Endothelial cell of umbilical vein (primary cell): ENCODE measurements at regions of chr17 and their contacts with region 1.

Region 1: DNA sequence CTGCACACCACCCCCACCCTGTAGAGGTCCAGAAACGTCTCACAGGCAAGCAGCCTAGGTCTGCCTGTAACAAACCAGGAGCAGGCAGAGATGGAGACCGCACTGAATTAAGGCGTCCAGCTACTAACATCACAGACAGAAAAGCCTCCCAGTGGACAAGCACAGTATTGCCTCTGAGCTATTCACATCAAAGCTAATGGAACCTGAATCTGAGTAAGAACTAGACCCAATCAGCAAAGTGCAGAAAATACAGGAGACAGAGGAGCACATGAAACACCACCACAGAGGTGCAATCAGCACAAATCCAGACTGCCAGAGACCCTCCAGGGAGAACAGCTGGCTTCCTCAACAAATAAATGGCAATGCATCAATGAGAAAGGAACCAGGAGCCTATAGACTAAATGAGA is 22.2 kb upstream of the PEMT start:
- DNase-seq: peak; percentile 73
- H3K4me3 ChIP-seq: no peak overlapping the region
- H3K27ac ChIP-seq: no peak overlapping the region
- H3K4me1 ChIP-seq: no peaks in the 10 kb centered on the region
- H3K27me3 ChIP-seq: peaks cover 0 to 1% of the 10 kb centered on the region in 2 experiments
- CTCF ChIP-seq: peak; percentile 66 to 78
- POLR2A ChIP-seq: no peak

Region 2: GRCh38 chr17:17568749-17569195 is 44.9 kb before region 1 on chr17:
- CTCF ChIA-PET with region 1: interaction called, 13 read pairs
- POLR2A ChIA-PET with region 1: no interaction called
- dilution Hi-C with region 1: no loop called
- intact Hi-C with region 1: no loop called
- DNase-seq: peak; percentile 38
- H3K4me3 ChIP-seq: no peak overlapping the region
- H3K27ac ChIP-seq: no peak overlapping the region
- H3K4me1 ChIP-seq: no peaks in the 10 kb centered on the region
- H3K27me3 ChIP-seq: no peaks in the 10 kb centered on the region
- CTCF ChIP-seq: peak; percentile 85 to 89
- POLR2A ChIP-seq: no peak

Region 3: GRCh38 chr17:17591355-17592298 is 22.1 kb before region 1 on chr17 and contains the start of gene PEMT:
- CTCF ChIA-PET with region 1: interaction called, 15 read pairs
- POLR2A ChIA-PET with region 1: interaction called, 6 read pairs
- dilution Hi-C with region 1: no loop called
- intact Hi-C with region 1: no loop called
- DNase-seq: peak; percentile 98
- H3K4me3 ChIP-seq: peak within 1 kb of the TSS; percentile 92 to 96 (median 95)
- H3K27ac ChIP-seq: peak within 1 kb of the TSS; percentile 67
- H3K4me1 ChIP-seq: peaks cover 9% of the 10 kb centered on the region
- H3K27me3 ChIP-seq: no peaks in the 10 kb centered on the region
- CTCF ChIP-seq: no peak
- POLR2A ChIP-seq: peak; percentile 84
- total RNA-seq, gene PEMT: 35.1 and 37.2 TPM in 2 replicates

Region 4: GRCh38 chr17:17598003-17598402 is 15.7 kb before region 1 on chr17:
- CTCF ChIA-PET with region 1: interaction called, 28 read pairs
- POLR2A ChIA-PET with region 1: no interaction called
- dilution Hi-C with region 1: no loop called
- intact Hi-C with region 1: no loop called
- DNase-seq: no peak
- H3K4me3 ChIP-seq: no peak overlapping the region
- H3K27ac ChIP-seq: no peak overlapping the region
- H3K4me1 ChIP-seq: no peaks in the 10 kb centered on the region
- H3K27me3 ChIP-seq: no peaks in the 10 kb centered on the region
- CTCF ChIP-seq: no peak
- POLR2A ChIP-seq: no peak

Region 5: GRCh38 chr17:17603178-17603894 is 10.4 kb before region 1 on chr17:
- CTCF ChIA-PET with region 1: interaction called, 28 read pairs
- POLR2A ChIA-PET with region 1: no interaction called
- dilution Hi-C with region 1: no loop called
- intact Hi-C with region 1: no loop called
- DNase-seq: no peak
- H3K4me3 ChIP-seq: no peak overlapping the region
- H3K27ac ChIP-seq: no peak overlapping the region
- H3K4me1 ChIP-seq: no peaks in the 10 kb centered on the region
- H3K27me3 ChIP-seq: peaks cover 0 to 2% of the 10 kb centered on the region in 2 experiments
- CTCF ChIP-seq: no peak
- POLR2A ChIP-seq: no peak

Region 6: DNA sequence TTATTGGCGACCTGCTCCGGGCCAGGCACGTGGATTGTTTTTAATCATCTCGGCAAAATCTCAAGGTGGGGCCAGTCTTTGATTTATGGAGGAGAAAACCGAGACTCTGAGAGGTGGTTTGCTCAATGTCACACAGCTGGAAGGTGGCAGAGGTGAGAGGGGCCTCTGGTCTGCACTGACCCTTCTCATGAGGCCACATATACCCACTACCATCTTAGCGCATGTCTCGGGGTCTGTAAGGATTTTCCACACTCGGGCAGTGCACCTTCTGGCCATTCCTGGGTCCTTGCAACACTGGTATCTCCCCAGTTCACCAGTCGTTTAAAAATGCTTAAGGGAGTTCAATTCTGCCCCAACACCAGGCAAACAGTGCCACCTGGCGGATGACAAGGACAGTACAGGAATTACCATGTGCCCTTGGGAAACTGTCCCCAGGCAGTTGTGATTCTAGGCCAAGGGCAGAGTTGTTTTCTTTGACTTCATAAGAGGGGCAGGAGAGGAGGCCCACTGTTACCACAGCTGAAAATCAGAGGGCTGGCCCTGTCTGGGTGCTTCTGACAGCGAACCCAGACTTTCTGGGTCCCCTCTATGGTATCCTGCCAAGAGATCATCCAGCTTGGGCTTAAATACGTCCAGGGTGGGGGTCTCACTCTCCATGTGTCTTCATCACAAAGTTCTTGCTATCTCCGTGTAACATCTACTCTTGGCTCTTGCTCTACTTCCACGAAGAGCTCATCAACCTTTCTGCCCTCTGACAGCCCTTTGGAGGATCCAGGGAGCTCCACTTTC is 28.1 kb after region 1 on chr17:
- CTCF ChIA-PET with region 1: interaction called, 29 read pairs
- POLR2A ChIA-PET with region 1: no interaction called
- dilution Hi-C with region 1: no loop called
- intact Hi-C with region 1: loop called (anchors 1 kb)
- DNase-seq: peak; percentile 74
- H3K4me3 ChIP-seq: no peak overlapping the region
- H3K27ac ChIP-seq: no peak overlapping the region
- H3K4me1 ChIP-seq: no peaks in the 10 kb centered on the region
- H3K27me3 ChIP-seq: no peaks in the 10 kb centered on the region
- CTCF ChIP-seq: peak; percentile 82 to 85
- POLR2A ChIP-seq: no peak